Activated CD8-positive, alpha-beta T cell treated with anti-CD3 and anti-CD28 coated beads, Interleukin-2, amount 10 ng/mL, durations not matched to agents 7 days and 5 days (primary cell): ENCODE measurements at regions of chr14 and their contacts with region 1.

Region 1: DNA sequence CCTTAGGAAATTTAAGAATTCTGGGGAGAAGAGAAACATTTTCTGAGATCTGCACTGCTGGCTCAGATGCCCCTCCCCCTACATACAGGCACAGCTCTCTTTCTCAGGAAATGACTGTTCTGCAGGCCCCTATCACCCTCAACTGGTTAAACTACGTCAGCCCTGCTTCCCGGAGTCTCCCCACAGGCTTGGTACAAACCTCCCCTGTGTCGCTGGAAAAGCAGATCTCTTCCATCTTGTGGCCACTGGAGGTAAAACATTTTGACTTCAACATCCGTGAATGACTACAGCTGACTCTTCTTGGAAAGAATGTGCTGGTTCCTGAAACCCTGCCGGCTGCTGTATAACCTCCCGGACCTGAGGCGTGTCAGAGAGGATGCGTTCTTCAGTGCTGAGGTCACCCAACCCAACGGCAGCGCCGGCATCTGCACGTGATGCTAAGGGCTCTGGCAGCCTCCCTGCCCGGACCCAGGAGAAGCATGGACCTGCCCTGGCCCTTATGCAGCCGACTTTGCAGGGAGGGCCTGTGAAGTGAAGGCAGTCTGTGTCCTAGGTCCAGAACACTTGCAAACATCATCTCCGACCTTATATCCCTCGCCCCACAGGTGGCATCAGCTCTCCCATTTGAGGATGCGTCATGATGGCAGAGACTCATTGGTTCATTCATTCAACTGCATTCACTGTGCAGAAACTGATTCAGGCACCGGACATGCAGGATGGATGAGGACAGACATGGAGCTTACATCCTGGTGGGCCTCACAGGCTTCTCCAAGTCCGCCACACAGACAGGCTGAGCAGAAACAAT is 129.3 kb downstream of the GCH1 start:
- DNase-seq: peak; percentile 92
- ATAC-seq: peak; percentile 84
- H3K4me3 Mint-ChIP-seq: peak overlapping the region; percentile 63
- H3K27ac Mint-ChIP-seq: peak overlapping the region; percentile 93
- H3K4me1 Mint-ChIP-seq: peaks cover 60% of the 10 kb centered on the region
- H3K27me3 Mint-ChIP-seq: peaks cover 10% of the 10 kb centered on the region

Region 2: DNA sequence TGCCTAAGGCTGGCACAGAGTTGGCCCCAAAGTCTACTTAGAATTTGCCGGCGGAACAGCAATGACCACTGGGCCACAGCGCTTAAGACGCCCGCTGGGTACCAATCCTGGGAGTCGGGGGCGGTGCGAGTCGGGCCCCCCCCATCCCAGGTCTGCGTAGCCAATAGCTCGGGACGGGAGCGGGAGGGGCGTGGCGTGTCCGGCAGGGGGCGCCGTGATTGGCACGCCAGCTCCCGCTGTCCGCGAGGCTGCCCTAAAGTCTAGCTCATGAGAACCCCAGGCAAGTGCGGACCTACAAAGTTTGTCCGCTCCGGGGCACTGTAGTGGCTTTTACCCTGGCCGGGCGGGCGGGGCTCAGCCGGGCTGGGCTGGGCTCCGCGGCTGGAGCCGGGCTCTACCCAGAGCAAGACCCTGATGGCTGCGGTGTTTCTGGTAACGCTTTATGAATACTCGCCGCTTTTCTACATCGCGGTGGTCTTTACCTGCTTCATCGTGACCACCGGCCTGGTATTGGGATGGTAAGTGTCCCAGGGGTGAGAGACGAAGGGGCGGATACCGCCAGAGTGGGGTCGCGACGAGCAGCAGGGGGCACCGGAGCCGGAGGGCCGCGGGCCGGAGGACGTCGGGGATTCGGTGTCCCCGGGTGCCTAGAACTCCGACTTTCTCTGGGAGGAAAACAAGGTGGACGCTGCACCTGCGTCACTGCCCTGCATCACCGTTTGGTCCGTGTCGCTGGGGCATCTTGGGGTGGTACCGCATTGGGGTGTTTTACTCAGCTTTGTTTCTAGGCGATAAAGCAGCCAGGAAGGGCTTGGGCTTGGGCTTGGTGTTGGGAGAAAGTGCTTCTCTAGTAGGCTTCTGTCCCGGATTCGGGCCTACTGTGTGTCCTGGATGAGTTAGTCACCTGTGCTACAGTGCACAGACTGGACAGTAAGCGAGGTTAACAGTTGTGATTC is 263.5 kb before region 1 on chr14 and contains the start of gene CGRRF1:
- CTCF ChIA-PET with region 1: interaction called, 14 read pairs
- POLR2A ChIA-PET with region 1: no interaction called
- DNase-seq: peak; percentile 97
- ATAC-seq: peak; percentile 99
- H3K4me3 Mint-ChIP-seq: peak within 1 kb of the TSS; percentile 93
- H3K27ac Mint-ChIP-seq: peak within 1 kb of the TSS; percentile 87
- H3K4me1 Mint-ChIP-seq: peaks cover 34% of the 10 kb centered on the region
- H3K27me3 Mint-ChIP-seq: peaks cover 8% of the 10 kb centered on the region
- total RNA-seq, gene CGRRF1: 13.6 to 13.7 TPM

Region 3: GRCh38 chr14:54627540-54628363 is 145.6 kb before region 1 on chr14:
- CTCF ChIA-PET with region 1: interaction called, 23 read pairs
- POLR2A ChIA-PET with region 1: no interaction called
- DNase-seq: peak; percentile 61
- ATAC-seq: peak; percentile 77
- H3K4me3 Mint-ChIP-seq: peak overlapping the region; percentile 75
- H3K27ac Mint-ChIP-seq: peak overlapping the region; percentile 90
- H3K4me1 Mint-ChIP-seq: peaks cover 44% of the 10 kb centered on the region
- H3K27me3 Mint-ChIP-seq: no peaks in the 10 kb centered on the region

Region 4: DNA sequence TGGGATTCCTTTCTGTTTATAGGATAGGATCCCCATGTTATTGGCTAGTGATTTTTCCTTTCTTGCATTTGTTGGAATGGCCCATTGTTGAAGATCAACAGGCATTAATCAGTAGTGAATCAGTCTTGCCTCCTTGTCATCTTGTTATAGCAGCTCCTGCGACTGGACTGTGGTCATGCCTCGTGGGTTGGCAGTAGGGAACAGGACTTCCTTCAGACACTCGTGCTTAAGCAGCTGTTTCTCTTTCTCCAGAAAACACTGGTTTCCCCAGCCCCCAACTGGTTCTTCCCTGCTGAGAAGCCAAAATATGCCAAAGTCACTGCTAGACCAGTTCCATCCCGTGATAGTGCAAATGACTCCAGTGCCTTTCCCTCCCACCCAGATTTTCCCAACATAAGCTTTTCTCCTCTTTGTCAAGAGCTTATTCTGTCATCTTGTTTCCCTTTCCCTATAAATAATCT is 123.0 kb before region 1 on chr14:
- CTCF ChIA-PET with region 1: no interaction called
- POLR2A ChIA-PET with region 1: no interaction called
- DNase-seq: no peak
- ATAC-seq: no peak
- H3K4me3 Mint-ChIP-seq: no peak overlapping the region
- H3K27ac Mint-ChIP-seq: no peak overlapping the region
- H3K4me1 Mint-ChIP-seq: peaks cover 10% of the 10 kb centered on the region
- H3K27me3 Mint-ChIP-seq: peaks cover 28% of the 10 kb centered on the region

Region 5: GRCh38 chr14:54691525-54692283 is 81.7 kb before region 1 on chr14:
- CTCF ChIA-PET with region 1: interaction called, 11 read pairs
- POLR2A ChIA-PET with region 1: no interaction called
- DNase-seq: peak; percentile 53
- ATAC-seq: peak; percentile 69
- H3K4me3 Mint-ChIP-seq: no peak overlapping the region
- H3K27ac Mint-ChIP-seq: no peak overlapping the region
- H3K4me1 Mint-ChIP-seq: peaks cover 28% of the 10 kb centered on the region
- H3K27me3 Mint-ChIP-seq: peaks cover 31% of the 10 kb centered on the region

Region 6: GRCh38 chr14:54722781-54723432 is 50.5 kb before region 1 on chr14:
- CTCF ChIA-PET with region 1: interaction called, 80 read pairs
- POLR2A ChIA-PET with region 1: interaction called, 4 read pairs
- DNase-seq: peak; percentile 42
- ATAC-seq: peak; percentile 79
- H3K4me3 Mint-ChIP-seq: no peak overlapping the region
- H3K27ac Mint-ChIP-seq: no peak overlapping the region
- H3K4me1 Mint-ChIP-seq: peaks cover 29% of the 10 kb centered on the region
- H3K27me3 Mint-ChIP-seq: peaks cover 5% of the 10 kb centered on the region

Region 7: DNA sequence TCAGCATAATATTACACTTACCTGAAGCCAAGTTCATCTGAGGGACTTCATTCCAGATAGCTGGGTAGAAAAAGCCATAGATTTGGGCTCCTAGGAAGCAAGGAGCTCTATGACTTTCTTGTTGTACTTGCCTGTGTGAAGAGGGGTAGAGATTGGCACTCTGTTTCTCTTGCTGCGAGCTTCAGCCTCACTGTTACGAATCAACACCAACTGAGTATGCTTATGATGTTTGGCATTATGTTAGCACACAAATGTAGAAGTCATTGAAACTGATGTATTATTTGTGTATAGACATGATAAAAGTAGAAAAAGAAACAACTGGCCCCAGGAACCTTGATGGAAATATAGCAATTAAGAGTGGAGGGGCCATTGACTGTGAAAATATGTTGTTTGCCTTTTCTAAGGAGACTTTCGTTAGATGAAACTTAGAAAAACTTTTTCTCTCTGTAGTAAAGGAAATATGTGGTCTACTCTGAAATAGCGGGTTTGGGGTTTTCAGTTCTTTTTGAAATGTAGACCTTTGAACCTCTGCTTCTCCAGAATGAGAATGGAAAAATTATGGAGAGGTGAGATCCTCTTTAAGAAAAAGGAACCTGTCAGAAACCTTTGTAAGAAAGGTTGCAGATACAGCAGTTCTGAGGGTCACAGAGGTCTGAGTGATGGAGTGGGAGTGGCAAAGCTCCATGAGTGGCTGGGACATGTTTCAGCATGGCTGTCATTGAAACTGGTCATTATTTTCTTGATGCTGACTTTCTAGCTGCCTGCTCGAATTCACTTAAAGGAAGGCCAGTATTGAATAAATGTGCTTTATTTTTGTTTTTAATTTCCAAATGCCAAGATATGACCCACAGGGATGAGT is 30.7 kb before region 1 on chr14:
- CTCF ChIA-PET with region 1: interaction called, 29 read pairs
- POLR2A ChIA-PET with region 1: interaction called, 3 read pairs
- DNase-seq: no peak
- ATAC-seq: peak; percentile 70
- H3K4me3 Mint-ChIP-seq: peak overlapping the region; percentile 38
- H3K27ac Mint-ChIP-seq: peak overlapping the region; percentile 84
- H3K4me1 Mint-ChIP-seq: peaks cover 72% of the 10 kb centered on the region
- H3K27me3 Mint-ChIP-seq: peaks cover 3% of the 10 kb centered on the region

Region 8: DNA sequence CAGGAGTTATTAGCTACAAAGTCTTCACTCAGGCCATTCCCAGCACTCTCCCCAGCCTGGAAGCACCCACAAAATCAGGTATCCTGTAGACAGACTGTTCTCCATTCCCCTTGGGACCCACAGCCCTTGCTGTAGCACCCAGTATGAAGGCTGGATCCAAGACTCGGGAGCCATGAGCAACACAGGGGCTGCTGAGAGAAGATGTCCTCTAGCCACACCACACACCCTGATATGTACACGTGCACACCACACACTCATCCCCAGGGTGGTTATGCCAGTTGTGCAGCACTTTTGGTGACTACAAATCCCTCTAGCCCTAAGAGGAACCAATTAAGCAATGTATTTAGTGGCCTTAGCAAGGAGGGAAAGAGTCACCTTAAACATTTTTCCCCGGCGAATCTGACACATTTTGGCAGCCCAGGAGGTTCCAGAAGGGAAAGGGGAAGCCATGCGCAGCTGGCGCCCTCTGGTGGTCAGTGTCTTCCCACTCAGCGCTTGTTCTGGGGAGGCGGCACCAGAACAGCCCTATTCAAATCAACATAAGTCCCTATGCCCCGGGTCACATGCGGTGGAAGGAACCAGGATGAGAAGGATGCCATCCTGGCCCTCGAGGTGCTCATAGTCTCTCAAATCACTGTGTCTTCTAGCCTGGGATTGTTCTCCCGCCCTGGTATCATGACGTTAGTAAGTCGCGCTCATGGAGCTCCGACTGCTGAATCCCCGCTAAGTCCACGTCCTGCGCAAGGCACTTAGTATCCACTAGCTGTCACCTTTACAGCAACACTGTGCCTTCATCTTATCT is 32.3 kb after region 1 on chr14:
- CTCF ChIA-PET with region 1: interaction called, 19 read pairs
- POLR2A ChIA-PET with region 1: no interaction called
- DNase-seq: peak; percentile 83
- ATAC-seq: peak; percentile 92
- H3K4me3 Mint-ChIP-seq: no peak overlapping the region
- H3K27ac Mint-ChIP-seq: no peak overlapping the region
- H3K4me1 Mint-ChIP-seq: peaks cover 5% of the 10 kb centered on the region
- H3K27me3 Mint-ChIP-seq: peaks cover 29% of the 10 kb centered on the region